Right lobe of liver (tissue), 6 donors: ENCODE measurements at regions of chr1 and their contacts with region 1.

Region 1: GRCh38 chr1:29245876-29246275 is 9.6 kb downstream of the PTPRU start:
- DNase-seq: no peak
- ATAC-seq: peak; percentile 67 to 82 (median 80)
- H3K4me3 ChIP-seq: no peak overlapping the region
- H3K27ac ChIP-seq: no peak overlapping the region
- H3K4me1 ChIP-seq: peaks cover 0 to 7% (median 0%) of the 10 kb centered on the region in 4 donors
- H3K27me3 ChIP-seq: no peaks in the 10 kb centered on the region
- CTCF ChIP-seq: peak; percentile 28 to 44 (median 42)
- POLR2A ChIP-seq: no peak

Region 2: DNA sequence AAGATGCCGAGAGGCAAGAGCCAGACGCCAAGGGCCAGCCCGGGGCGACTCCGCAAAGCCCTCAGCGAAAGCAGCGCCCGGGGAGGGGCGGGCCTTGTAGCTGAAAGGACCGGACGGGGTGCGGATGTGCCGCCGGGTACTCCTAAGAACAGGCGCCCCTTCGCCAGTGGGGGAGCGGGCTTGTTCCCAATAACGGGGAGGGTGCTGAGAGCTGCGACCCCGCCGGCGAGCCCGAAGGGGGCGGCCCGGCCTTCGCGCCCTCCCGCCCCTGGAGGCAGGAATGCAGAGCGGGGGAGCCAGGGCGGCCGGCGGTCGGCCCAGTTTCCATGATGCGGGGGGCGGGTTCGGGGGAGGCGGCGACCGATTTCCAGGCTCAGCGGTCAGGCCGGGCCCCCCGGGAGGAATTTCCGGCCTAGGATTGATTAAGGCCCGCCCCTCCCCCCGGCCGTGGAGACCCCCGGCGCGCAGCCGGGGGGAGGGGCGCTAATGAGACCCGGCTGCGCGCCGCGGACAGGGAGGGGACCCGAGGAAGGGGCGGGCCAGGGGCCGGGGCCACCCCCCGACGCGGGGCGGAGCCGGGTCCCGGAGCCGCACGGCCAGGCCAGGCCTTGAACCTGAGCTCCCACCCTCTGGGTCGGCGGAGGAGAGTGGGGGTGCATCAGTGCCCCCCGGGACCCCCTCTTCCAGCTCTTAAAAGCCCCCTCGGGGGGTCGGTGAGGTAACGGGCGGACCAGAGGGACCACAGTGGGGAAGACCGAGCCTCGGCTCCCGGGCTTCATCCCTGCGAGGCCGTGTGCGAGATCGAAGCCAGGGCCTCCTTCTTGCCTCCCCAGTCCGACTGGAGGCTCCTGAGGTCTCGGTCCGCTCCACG is 121.3 kb before region 1 on chr1:
- intact Hi-C with region 1: no loop called
- DNase-seq: peak; percentile 67 to 78 (median 75)
- ATAC-seq: peak; percentile 59 to 67 (median 62)
- H3K4me3 ChIP-seq: peak overlapping the region; percentile 64 to 74 (median 66)
- H3K27ac ChIP-seq: peak overlapping the region; percentile 68 to 75 (median 70)
- H3K4me1 ChIP-seq: peaks cover 0 to 25% (median 4%) of the 10 kb centered on the region in 4 donors
- H3K27me3 ChIP-seq: no peaks in the 10 kb centered on the region
- CTCF ChIP-seq: peak; percentile 40 to 95 (median 50)
- POLR2A ChIP-seq: peak; percentile 66

Region 3: DNA sequence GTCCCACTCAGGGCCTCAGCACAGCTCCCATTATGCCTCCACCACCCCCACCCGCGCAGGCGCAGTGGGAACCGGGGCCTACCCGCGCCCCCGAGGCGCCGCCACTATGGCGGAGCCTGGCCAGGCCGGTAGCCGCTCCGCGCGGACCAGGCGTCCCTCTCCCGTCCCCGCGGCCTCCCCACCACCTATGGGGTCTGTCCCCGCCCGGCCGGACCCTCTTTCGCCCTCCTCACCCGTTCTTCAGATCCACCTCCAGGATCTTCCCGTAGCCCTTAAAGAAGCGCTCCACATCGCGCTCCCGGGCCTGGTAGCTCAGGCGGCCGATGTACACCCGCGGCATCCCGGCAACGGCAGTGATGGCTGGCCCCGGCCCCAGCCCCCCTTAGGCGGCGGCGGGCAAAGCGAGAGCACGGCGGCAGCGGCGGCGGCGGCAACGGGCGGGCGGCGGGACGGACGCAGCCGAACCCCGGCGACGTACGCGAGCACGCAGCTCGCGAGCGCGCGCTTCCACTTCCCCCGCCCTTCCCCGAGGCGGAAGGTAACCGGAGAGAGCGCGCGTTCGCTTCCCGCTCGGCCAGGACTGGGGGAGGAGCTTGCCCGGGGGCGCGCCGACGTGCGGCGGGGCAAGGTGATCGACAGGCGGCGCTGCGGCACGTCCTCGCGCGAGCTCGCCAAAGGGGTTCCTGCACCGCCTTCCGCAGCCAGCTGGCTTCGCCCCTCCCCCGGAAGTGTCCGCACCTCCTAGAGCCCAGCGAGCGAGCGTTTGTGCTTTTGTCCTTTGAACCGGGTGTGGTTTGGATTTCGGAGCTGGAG is 64.3 kb before region 1 on chr1 and contains the start of gene SRSF4:
- intact Hi-C with region 1: no loop called
- DNase-seq: peak; percentile 100
- ATAC-seq: peak; percentile 88 to 96 (median 89)
- H3K4me3 ChIP-seq: peak within 1 kb of the TSS; percentile 82 to 88 (median 86)
- H3K27ac ChIP-seq: peak within 1 kb of the TSS; percentile 99
- H3K4me1 ChIP-seq: peaks cover 0 to 54% (median 22%) of the 10 kb centered on the region in 4 donors
- H3K27me3 ChIP-seq: no peaks in the 10 kb centered on the region
- CTCF ChIP-seq: peak; percentile 71 to 96 (median 84)
- POLR2A ChIP-seq: peak; percentile 99
- total RNA-seq, gene SRSF4: 25.6 to 42.1 (median 33.0) TPM

Region 4: DNA sequence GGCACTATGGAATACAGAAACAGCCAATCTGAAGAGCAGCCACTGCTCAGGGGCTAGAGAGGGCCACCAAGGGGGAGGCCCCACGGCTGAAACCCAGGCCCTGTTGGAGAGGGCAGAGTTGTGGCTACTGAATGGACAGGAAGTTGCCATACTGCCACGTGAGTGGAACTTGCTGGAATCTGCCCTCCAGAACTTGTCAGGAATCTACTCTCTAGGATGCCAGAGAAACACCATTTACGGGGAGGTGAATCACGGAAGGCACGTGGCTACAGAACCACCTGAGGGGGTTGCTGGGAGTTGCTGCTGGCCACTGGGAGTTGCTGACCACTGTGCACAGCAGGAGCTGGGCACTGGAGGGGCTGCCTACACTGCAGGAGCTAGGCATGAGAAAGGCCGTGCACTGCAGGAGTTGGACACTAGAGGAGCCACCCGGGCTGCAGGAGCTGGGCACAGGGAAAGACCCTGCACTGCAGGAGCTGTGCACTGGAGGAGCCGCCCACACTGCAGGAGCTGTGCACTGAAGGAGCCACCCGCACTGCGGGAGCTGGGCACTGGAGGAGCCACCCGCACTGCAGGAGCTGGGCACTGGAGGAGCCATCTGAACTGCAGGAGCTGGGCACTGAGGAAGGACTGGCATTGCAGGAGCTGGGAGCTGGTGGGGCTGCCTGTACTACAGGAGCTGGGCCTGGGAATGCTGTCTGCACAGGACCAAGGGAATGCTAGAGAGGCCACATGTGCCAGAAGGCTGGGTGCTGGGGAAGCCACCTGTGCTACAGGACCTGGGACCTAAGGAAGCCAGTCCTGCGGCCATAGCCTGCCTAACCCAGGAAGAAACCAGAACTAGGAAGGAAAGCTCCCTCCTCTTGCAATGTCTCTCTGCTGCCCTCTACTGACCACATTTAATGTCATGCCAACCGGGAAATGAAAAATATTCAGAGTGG is 1134.1 kb after region 1 on chr1:
- intact Hi-C with region 1: loop called in 1 of 2 experiments (anchors 10 kb)
- DNase-seq: peak in 1 of 3 donors; percentile 54
- ATAC-seq: peak; percentile 78 to 90 (median 84)
- H3K4me3 ChIP-seq: no peak overlapping the region
- H3K27ac ChIP-seq: no peak overlapping the region
- H3K4me1 ChIP-seq: no peaks in the 10 kb centered on the region
- H3K27me3 ChIP-seq: no peaks in the 10 kb centered on the region
- CTCF ChIP-seq: peak; percentile 71 to 87 (median 83)
- POLR2A ChIP-seq: no peak